ACHN (cell line): ENCODE measurements at regions of chr5 and their contacts with region 1.

Region 1: DNA sequence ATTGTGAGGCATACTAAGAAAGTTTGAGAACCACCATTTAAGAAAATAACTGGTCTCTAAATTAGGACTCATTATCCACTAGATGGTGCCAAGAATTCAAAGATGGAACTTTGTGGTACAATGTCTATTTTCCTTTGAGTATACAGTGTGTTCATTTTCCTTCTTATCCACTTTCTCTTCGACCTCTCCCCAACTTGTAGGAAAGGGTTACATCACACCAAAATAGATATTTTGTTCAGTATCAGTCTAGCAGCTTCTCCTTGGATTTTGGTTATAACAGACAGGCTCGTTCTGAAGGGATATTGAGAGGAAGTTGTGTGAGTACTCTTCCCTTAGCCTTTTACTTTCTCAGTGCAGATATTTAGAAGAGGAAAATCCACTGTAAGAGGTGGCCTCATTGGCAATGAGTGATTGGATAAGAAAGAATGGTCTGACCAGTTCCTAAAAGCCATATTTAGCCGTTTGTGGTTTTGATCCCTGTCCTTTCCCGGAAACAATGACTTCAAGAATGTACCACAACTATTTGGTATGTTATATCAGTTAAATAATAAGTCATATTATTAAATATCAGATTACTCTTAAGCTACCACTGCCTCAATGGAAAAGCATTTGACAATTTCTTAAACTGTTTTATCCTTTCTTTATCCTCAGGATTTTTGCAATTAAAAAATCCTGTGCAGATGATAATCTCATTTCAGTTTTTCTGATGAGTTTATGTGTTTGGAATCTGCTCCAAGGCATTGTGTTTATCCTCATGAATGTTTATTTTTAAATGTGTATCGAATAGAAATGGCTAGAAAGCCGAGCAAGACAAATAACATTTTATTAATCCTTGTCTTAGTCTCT is 69.0 kb upstream of the GRAMD2B start:
- DNase-seq: peak; percentile 87

Region 2: GRCh38 chr5:126544087-126544740 is 190.0 kb after region 1 on chr5:
- in situ Hi-C with region 1: loop called (anchors 25 kb)
- DNase-seq: peak; percentile 49